Activated CD8-positive, alpha-beta memory T cell treated with anti-CD3 and anti-CD28 coated beads, Interleukin-2, amount 10 ng/mL, durations not matched to agents 7 days and 5 days (primary cell): ENCODE measurements at regions of chr1 and their contacts with region 1.

Region 1: GRCh38 chr1:46724991-46725735 is 6.2 kb upstream of the EFCAB14 start:
- DNase-seq: peak; percentile 80
- ATAC-seq: peak; percentile 97
- H3K4me3 Mint-ChIP-seq: no peak overlapping the region
- H3K27ac Mint-ChIP-seq: no peak overlapping the region
- H3K4me1 Mint-ChIP-seq: no peaks in the 10 kb centered on the region
- H3K27me3 Mint-ChIP-seq: peaks cover 35% of the 10 kb centered on the region

Region 2: DNA sequence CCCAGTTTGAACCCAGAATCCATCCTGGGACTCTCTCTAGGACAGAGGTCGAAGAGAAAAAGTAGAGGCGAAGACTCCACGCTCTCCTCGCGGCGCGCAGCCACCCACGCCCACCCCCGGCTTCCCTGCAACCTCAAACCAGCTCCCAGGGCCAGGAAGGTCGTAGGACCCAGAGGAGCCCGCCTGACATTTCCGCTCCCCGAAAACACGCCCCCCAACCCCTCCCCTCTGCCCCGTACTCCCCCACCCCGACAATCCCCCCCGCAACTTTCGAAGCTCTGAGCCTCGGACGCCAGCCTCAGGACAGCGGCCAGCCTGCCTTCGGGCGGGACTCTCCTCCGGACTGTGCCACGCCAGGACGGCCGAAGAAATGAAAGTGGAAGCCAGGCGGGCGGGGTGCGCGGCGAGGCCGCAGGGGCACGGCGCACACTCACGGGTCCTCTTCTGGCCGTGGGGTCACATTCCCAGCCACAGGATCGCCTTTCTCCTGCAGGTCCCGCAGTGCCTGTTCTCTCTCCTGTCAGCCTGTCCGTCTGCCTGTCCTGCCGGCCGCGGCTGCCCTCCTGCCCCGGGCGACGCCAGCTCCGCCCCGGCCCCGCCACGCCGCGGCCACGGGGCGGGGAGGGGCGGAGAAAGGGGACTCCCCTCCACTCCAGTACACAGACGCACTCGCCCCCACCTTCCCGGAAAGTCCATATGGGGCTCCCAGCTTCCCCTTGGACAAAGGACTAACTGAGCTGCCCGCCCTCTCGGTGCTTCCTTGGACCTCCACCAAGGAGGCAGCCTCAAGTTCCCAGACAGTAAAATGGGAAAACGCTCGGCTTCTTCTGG is 108.7 kb before region 1 on chr1 and contains the start of gene MOB3C:
- CTCF ChIA-PET with region 1: interaction called, 19 read pairs
- DNase-seq: peak; percentile 74
- ATAC-seq: peak; percentile 88
- H3K4me3 Mint-ChIP-seq: peak within 1 kb of the TSS; percentile 91
- H3K27ac Mint-ChIP-seq: peak within 1 kb of the TSS; percentile 84
- H3K4me1 Mint-ChIP-seq: peaks cover 57% of the 10 kb centered on the region
- H3K27me3 Mint-ChIP-seq: no peaks in the 10 kb centered on the region
- total RNA-seq, gene MOB3C: 18.3 to 20.7 TPM

Region 3: DNA sequence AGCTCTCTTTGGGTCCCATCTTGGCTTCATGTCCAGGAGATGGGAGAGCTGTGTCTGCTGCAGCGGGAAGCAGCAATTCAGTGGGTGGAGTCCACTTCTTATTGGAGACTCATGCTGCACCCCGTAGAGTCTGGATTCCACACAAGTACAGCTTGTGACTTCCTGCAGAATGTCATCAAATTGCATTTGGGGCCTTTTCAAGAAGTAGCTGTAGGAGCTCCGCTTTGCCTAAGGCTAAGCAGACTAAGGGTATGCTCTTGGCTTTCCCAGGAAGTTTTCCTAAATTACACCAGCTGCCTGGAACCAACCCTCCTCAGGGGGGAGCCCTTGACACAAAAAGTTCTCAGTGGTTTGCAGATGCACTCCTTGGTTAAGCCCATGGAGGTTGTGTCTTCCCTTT is 102.8 kb before region 1 on chr1:
- CTCF ChIA-PET with region 1: interaction called, 19 read pairs
- DNase-seq: no peak
- ATAC-seq: no peak
- H3K4me3 Mint-ChIP-seq: no peak overlapping the region
- H3K27ac Mint-ChIP-seq: no peak overlapping the region
- H3K4me1 Mint-ChIP-seq: peaks cover 17% of the 10 kb centered on the region
- H3K27me3 Mint-ChIP-seq: no peaks in the 10 kb centered on the region

Region 4: DNA sequence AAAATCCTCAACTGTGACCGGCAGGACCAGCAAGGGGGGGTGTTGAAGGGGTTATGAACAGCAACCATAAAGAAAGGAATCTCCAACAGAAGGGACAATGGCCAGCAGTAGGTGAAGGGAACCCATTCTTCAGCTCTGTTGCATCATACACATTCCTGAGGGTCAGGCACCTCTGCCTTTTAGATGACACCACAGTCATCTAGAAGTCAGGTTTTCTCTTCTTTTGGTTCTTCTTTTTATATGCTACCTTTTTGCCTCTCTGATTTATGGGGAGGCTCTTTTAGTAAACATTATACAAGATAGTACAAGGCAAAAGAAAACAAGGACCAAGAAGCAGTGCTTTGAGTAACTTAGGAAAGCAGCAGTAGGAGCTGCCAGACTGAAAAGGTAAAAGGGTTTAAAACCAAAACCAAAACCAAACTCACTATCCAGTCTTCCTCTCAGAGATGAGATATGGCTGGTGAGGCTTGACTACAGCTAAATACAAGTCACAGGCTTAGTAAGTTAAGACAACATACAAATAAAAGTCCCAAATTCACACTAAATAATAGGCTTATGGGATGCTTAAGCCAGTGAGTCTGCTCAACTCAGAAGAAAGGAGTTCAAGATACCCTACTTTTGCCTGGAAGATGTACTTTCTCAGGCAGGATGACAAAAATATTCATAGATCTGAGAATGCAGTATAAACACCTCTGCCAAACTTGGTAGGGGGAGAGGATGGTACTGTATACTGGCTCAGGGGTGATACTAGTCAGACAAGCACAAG is 49.4 kb before region 1 on chr1:
- CTCF ChIA-PET with region 1: interaction called, 12 read pairs
- DNase-seq: no peak
- ATAC-seq: peak; percentile 91
- H3K4me3 Mint-ChIP-seq: peak overlapping the region; percentile 34
- H3K27ac Mint-ChIP-seq: peak overlapping the region; percentile 94
- H3K4me1 Mint-ChIP-seq: peaks cover 39% of the 10 kb centered on the region
- H3K27me3 Mint-ChIP-seq: no peaks in the 10 kb centered on the region